Activated T-helper 1 cell treated with anti-CD3 and anti-CD28 coated beads, Interleukin-12 subunit alpha, Interleukin-12 subunit beta, Interleukin-2, Interleukin-4 antibody, amounts not matched to agents 30 ng/mL and 10 ng/mL and 1 ng/mL, durations not matched to agents 14 hours and 24 hours and 36 hours (primary cell): ENCODE measurements at regions of chr3 and their contacts with region 1.

Region 1: DNA sequence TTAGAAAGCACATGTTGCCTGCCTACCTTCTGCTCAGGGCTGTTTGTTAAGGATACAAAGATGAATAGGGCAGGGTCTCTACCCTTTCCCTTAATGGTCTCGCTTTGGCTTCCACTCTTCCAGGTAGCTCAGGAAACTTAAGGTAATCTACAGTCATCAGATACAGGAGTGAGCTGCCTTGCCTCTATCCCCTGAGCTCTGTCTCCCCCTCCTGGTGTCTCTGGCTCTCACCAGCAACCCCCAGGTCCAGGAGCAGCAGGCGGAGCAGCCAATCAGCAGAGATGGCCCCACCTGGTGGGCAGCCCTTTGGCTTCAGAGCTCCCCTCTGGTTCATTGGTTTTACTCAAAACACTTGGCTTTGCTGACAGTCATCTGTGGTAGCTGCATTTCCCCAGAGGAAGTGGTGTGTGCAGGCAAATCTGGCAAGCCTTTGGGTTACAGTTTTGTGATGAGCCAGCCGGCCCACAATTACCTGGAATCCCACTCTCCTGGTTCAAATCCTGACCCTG is 8.5 kb upstream of the CX3CR1 start:
- DNase-seq: peak; percentile 80
- H3K4me3 Mint-ChIP-seq: no peak overlapping the region
- H3K27ac Mint-ChIP-seq: peak overlapping the region; percentile 25
- H3K4me1 Mint-ChIP-seq: peaks cover 68% of the 10 kb centered on the region
- H3K27me3 Mint-ChIP-seq: peaks cover 3% of the 10 kb centered on the region

Region 2: DNA sequence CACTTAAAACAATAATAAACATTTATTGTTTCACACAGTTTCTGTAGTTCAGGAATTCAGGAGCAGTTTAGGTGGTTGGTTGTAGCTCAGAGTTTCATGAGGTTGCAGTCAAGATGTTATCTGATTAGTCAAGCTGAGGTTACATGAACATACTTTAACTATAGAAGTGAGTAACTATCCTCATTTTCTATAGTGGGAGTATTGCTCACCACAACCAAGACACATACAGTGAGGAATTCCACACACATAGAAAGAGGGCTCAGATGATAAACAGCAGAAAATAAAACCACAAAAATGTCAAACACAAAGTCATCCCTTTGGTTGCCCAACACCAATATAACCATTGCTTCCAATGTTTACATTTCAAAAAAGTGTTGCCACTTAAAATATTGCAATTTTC is 250.2 kb before region 1 on chr3:
- intact Hi-C with region 1: no loop called
- DNase-seq: no peak
- H3K4me3 Mint-ChIP-seq: no peak overlapping the region
- H3K27ac Mint-ChIP-seq: no peak overlapping the region
- H3K4me1 Mint-ChIP-seq: peaks cover 6% of the 10 kb centered on the region
- H3K27me3 Mint-ChIP-seq: peaks cover 10% of the 10 kb centered on the region

Region 3: DNA sequence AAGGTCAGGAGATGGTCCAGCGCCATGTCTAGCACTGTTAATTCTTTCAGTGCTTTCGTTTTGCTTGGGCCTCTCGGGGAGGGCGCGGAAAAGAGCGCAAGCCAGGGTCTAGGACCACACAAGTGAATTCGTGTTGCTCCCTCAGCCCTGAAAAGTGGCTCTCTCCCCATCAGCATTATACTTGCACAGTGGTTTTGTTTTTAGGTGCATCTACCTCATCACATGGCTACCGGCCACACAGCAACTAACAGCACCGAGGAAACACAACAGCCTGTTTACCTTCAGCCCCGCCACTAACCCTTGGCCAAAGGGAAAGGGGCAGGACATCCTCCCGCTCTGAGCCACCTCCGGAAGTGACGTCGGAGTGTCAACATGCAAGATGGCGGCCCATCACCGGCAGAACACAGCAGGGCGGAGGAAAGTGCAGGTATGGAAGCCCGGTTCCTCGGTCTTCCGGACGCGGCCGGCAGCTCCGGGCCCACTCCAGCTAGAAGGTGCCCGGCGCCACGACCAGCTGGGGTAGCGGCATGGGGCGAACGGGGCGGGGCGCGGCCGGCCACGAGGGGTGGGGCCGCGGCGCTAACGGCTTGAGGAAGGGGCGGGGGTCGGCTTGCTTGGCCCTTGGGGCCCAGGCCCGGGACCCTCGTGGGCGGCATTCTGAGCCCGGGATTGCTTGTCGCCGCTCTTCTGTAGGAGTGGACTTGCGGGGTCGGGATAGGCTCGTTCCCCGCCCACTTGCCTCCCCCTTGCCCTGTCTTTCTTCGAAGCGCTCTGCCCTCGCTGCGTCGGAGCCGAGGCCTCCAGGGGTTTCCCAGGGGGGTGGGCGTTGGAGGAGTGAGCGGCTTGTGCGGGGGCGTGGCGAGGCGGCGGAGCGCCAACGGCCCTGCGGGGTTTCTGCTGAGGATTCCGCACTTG is 236.4 kb before region 1 on chr3 and contains the starts of genes SCN11A and WDR48:
- intact Hi-C with region 1: loop called (anchors 5 kb)
- DNase-seq: peak; percentile 91
- H3K4me3 Mint-ChIP-seq: peak within 1 kb of the TSS; percentile 93
- H3K27ac Mint-ChIP-seq: peak within 1 kb of the TSS; percentile 95
- H3K4me1 Mint-ChIP-seq: peaks cover 30% of the 10 kb centered on the region
- H3K27me3 Mint-ChIP-seq: no peaks in the 10 kb centered on the region
- total RNA-seq, gene SCN11A: 0.05 TPM in 1 of 2 replicates, not detected in the other
- total RNA-seq, gene WDR48: 40.6 and 41.5 TPM in 2 replicates

Region 4: GRCh38 chr3:39126532-39127071 is 161.8 kb before region 1 on chr3:
- intact Hi-C with region 1: loop called (anchors 1 kb)
- DNase-seq: no peak
- H3K4me3 Mint-ChIP-seq: no peak overlapping the region
- H3K27ac Mint-ChIP-seq: no peak overlapping the region
- H3K4me1 Mint-ChIP-seq: peaks cover 28% of the 10 kb centered on the region
- H3K27me3 Mint-ChIP-seq: peaks cover 12% of the 10 kb centered on the region

Region 5: GRCh38 chr3:39189959-39190269 is 98.4 kb before region 1 on chr3:
- intact Hi-C with region 1: loop called (anchors 1 kb)
- DNase-seq: peak; percentile 46
- H3K4me3 Mint-ChIP-seq: no peak overlapping the region
- H3K27ac Mint-ChIP-seq: peak overlapping the region; percentile 61
- H3K4me1 Mint-ChIP-seq: peaks cover 22% of the 10 kb centered on the region
- H3K27me3 Mint-ChIP-seq: no peaks in the 10 kb centered on the region

Region 6: DNA sequence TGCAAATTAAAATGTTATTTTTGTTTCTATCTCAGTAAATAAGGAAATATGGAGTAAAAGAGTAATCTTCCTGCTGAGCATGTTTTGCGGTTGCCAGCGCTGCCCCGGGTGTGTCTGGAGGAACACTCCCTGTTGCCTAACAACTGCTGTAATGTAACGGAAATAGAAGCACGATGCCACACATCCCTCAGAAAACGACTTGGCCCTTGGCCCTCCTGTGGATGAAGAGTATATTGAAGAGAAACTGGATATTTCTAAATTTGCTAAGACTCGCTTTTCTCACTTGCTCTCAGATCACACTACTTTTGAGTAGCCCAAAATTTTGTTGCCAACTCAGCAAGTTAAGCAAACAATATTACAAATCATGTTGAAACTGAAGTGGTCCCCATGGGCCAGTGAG is 27.4 kb before region 1 on chr3:
- intact Hi-C with region 1: loop called (anchors 1 kb)
- DNase-seq: peak; percentile 71
- H3K4me3 Mint-ChIP-seq: peak overlapping the region; percentile 71
- H3K27ac Mint-ChIP-seq: peak overlapping the region; percentile 73
- H3K4me1 Mint-ChIP-seq: peaks cover 87% of the 10 kb centered on the region
- H3K27me3 Mint-ChIP-seq: peaks cover 2% of the 10 kb centered on the region

Region 7: DNA sequence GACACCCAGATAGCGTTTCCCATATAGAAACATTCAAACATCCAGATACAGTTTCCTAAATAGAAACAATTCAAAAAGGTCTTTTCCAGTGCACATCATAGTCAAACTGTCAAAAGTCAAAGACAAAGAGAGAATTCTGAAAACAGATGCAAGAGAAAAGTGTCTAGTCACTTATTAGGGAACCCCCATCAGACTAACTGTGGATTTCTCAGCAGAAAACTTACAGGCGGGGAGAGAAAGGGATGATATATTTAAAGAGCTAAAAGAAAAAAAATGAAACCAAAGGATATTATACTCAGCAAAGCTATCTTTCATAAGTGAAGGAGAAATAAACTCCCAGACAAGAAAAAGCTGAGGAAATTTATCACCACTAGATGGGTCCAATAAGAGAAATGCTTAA is 13.8 kb after region 1 on chr3:
- intact Hi-C with region 1: no loop called
- DNase-seq: no peak
- H3K4me3 Mint-ChIP-seq: no peak overlapping the region
- H3K27ac Mint-ChIP-seq: no peak overlapping the region
- H3K4me1 Mint-ChIP-seq: peaks cover 4% of the 10 kb centered on the region
- H3K27me3 Mint-ChIP-seq: peaks cover 36% of the 10 kb centered on the region

Region 8: DNA sequence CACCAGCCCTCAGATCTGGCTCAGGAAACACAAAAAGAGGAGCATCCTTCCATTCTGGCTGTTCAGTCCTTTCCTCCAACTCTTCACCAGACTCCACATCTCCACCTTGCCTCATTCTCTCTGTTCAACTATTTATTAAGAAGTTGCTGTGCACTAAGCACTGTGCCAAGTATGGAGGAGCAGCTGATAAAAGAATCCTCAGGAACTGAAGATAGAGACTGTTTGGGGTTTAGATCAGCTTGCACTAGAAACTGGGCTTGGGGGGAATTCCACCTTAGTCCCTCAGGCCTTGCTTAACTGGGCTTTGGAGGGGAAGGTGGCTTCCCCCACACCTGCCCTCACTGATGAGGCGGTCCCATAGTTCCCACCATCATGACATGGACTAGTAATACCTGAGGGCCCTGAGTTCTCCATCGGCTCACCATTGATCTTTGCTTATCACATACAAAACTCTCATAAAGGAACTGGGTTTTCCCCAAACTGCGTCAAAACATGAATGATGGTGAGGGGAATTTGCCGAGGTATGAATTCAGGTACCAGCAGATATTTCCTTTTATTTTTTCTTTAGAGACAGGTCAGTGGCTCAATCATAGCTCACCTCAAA is 39.5 kb after region 1 on chr3:
- intact Hi-C with region 1: loop called (anchors 2 kb)
- DNase-seq: peak; percentile 28
- H3K4me3 Mint-ChIP-seq: peak overlapping the region; percentile 39
- H3K27ac Mint-ChIP-seq: peak overlapping the region; percentile 75
- H3K4me1 Mint-ChIP-seq: peaks cover 74% of the 10 kb centered on the region
- H3K27me3 Mint-ChIP-seq: no peaks in the 10 kb centered on the region